ENCODE measurements at regions of chr5 and their contacts with region 1.

Region 1: DNA sequence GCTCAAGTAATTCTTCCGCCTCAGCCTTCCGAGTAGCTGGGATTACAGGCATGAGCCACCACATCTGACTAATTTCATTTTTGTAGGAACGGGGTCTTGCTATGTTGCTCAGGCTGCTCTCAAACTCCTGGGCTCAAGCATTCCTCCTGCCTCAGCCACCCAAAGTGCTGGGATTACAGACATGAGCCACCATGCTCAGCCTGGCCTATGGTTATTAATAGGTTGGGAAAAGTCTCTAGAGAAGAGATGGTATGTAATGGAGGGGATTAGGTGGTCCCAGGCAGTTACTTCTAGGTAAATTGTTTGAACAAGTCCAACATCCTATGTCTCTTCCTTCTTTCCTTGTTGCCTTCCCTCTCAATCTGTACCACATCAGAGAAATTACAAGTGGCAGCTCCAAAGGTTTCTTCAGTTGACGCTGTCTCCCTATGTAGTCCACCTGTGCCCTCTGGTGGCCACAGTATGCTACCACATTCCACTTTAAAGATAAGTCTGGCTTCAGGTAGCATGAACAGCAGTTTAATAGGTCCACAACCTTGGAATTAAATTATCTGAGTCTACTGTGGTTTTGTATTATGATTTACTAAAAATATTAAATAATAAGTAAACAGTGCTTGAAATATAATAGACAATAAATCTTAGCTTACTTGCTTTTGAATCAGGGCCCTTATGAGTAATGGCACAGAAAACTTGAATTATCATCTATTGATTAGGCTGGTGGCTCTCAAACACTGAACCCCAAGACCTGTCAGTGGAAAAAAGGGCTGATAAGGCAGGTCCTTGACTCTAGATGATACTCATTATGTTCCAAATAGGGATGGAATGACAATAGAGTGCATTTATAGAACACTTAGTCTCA is 9.7 kb downstream of the TIGD6 start:
- DNase-seq: peak in 4 of 5 donors; percentile 78 to 93 (median 83)
- H3K4me3 ChIP-seq: no peak overlapping the region
- H3K27ac ChIP-seq: no peak overlapping the region
- H3K4me1 ChIP-seq: no peaks in the 10 kb centered on the region
- H3K27me3 ChIP-seq: no peaks in the 10 kb centered on the region
- CTCF ChIP-seq: peak; percentile 97

Region 2: DNA sequence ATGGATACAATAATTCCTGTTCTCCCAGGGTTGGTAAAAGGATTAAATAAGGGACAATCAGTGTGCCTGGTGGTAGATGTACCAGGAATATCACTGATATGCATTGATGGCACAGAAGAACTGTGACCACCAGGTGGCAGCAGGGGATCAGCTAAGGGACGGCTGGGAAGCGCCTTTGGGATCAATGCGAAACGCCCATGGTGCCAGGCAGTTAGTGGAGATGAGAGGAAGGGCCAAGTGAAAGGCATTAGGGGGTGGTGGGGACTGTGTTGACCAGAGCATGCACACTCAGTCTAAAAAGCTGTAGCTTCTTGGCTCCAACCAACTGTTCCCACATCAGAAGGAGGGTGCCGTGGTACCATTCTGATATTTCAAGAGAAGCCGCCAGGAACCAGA is 353.9 kb before region 1 on chr5:
- intact Hi-C with region 1: loop called (anchors 10 kb)
- DNase-seq: peak; percentile 79 to 92 (median 84)
- H3K4me3 ChIP-seq: no peak overlapping the region
- H3K27ac ChIP-seq: no peak overlapping the region
- H3K4me1 ChIP-seq: peaks cover 0 to 18% (median 7%) of the 10 kb centered on the region in 3 donors
- H3K27me3 ChIP-seq: no peaks in the 10 kb centered on the region
- CTCF ChIP-seq: peak; percentile 95

Region 3: GRCh38 chr5:149834246-149834855 is 156.4 kb before region 1 on chr5:
- intact Hi-C with region 1: loop called (anchors 5 kb)
- DNase-seq: peak in 4 of 5 donors; percentile 79 to 91 (median 83)
- H3K4me3 ChIP-seq: no peak overlapping the region
- H3K27ac ChIP-seq: no peak overlapping the region
- H3K4me1 ChIP-seq: no peaks in the 10 kb centered on the region
- H3K27me3 ChIP-seq: no peaks in the 10 kb centered on the region
- CTCF ChIP-seq: peak; percentile 63

Measured in kidney (tissue), 22 donors.